OCI-LY7 (cell line): ENCODE measurements at regions of chr3 and their contacts with region 1.

Region 1: DNA sequence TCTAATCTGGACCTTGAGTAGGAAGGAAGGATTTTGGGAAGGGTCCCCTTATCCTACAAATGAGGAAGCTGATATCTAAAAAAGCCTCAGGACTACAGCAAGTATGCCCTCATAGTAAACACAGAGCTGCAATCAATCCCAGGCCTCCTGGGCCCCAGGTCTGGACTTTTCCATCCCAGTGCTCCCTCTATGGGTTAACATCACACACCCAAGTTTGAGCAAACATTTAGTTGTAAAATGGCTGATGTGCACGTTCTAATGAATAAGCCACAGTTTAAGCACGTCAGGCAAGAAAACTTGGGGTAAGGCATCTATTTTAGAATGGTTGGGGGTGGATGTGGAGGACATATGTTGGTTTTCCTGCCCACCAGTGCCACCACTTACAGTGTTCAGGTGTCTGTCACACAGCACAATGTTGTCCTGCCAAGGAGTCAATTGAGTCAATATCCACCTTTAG is 44.3 kb upstream of the UBE2E1 start:
- DNase-seq: peak; percentile 79
- H3K4me3 ChIP-seq: peak overlapping the region; percentile 42
- H3K27ac ChIP-seq: peak overlapping the region; percentile 92
- H3K4me1 ChIP-seq: peaks cover 66% of the 10 kb centered on the region
- CTCF ChIP-seq: peak; percentile 75

Region 2: DNA sequence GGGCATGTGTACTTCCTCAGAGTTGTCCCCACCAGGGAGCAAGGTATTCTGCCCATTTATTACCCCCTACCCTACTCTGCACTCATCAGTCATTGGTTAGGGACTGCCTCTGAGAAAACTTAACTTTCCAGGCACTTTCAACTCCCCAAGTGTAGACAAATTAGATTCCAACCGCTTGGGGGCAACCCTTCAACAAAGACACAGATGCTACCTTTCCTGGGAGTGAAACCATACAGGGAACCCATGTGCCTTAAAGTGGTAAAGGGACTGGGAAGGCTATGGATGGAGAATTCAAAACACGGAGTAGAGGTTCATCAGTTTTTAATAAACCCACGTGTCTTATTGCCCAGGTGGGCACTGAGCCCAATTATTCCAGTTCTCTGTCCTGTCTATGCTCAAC is 577.7 kb before region 1 on chr3:
- CTCF ChIA-PET with region 1: no interaction called
- POLR2A ChIA-PET with region 1: no interaction called
- intact Hi-C with region 1: loop called (anchors 1 kb)
- DNase-seq: peak; percentile 58
- H3K4me3 ChIP-seq: no peak overlapping the region
- H3K27ac ChIP-seq: no peak overlapping the region
- H3K4me1 ChIP-seq: peaks cover 19% of the 10 kb centered on the region
- CTCF ChIP-seq: peak; percentile 75

Region 3: GRCh38 chr3:23442598-23443383 is 318.7 kb before region 1 on chr3:
- CTCF ChIA-PET with region 1: no interaction called
- POLR2A ChIA-PET with region 1: interaction called, 3 read pairs
- intact Hi-C with region 1: loop called (anchors 5 kb)
- DNase-seq: peak; percentile 57
- H3K4me3 ChIP-seq: no peak overlapping the region
- H3K27ac ChIP-seq: no peak overlapping the region
- H3K4me1 ChIP-seq: peaks cover 63% of the 10 kb centered on the region
- CTCF ChIP-seq: no peak

Region 4: GRCh38 chr3:23653647-23654525 is 107.6 kb before region 1 on chr3:
- CTCF ChIA-PET with region 1: no interaction called
- POLR2A ChIA-PET with region 1: interaction called, 7 read pairs
- intact Hi-C with region 1: loop called (anchors 1 kb)
- DNase-seq: peak; percentile 97
- H3K4me3 ChIP-seq: peak overlapping the region; percentile 47
- H3K27ac ChIP-seq: peak overlapping the region; percentile 97
- H3K4me1 ChIP-seq: peaks cover 77% of the 10 kb centered on the region
- CTCF ChIP-seq: no peak

Region 5: GRCh38 chr3:23751212-23751723 is 10.2 kb before region 1 on chr3:
- CTCF ChIA-PET with region 1: interaction called, 5 read pairs
- POLR2A ChIA-PET with region 1: interaction called, 13 read pairs
- intact Hi-C with region 1: no loop called
- DNase-seq: no peak
- H3K4me3 ChIP-seq: no peak overlapping the region
- H3K27ac ChIP-seq: no peak overlapping the region
- H3K4me1 ChIP-seq: peaks cover 17% of the 10 kb centered on the region
- CTCF ChIP-seq: no peak